GM12878 (cell line): ENCODE measurements at regions of chr10 and their contacts with region 1.

Region 1: DNA sequence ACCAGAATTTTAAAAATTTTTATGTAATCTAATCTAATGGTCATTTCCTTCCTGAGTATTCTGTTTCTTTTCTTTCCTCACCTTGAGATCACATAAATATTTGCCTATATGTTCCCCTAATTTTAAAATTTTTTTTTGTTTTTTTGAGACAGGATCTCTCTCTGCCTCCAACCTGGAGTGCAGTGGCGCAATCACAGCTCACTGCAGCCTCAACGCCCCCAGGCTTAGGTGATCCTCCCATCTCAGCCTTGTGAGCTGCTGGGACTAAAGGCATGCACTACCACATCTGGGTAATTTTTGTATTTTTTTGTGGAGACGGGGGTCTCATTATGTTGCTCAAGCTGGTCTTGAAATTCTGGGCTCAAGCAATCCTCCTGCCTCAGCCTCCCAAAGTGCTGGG is 4.1 kb upstream of the PROSER2 start:
- DNase-seq: no peak
- ATAC-seq: no peak
- H3K4me3 ChIP-seq: no peak overlapping the region
- H3K27ac ChIP-seq: no peak overlapping the region
- H3K4me1 ChIP-seq: no peaks in the 10 kb centered on the region
- H3K27me3 ChIP-seq: peaks cover 0 to 4% of the 10 kb centered on the region in 2 experiments; a peak in 2 of 4 replicates
- CTCF ChIP-seq: no peak
- EP300 ChIP-seq: no peak
- POLR2A ChIP-seq: no peak
- RAD21 ChIP-seq: no peak

Region 2: DNA sequence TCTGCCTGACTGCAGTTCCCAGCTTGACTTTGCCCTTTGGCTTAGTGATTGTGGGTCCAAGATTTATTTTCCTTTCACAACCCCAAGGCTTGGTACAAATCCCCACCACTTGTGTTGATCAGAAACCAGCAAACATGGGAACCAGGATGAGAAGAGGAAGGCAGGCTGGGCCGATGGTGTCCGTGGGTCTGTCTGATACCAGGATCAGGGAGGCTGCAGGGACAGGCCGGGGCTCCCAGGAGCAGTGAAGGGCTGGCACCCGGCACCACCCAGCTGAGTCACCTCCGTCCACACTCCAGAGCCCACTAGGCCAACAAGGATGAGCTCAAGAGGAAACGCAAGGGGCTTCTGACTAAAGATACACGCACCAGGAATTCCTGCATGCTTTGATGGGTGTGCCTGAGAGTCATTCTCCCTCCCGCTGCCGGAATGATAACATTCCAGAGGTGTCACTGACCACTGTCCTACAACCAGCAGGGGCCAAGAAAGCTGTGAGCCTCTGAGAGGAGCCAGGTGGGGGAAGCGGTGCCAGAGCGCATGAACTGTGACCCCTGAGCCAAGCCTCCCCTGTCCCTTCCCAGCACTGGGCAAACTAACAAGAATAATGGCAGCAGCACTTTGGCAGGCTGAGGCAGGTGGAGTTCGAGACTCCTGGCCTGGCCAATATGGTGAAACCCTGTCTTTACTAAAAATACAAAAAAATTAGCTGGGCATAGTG is 25.1 kb before region 1 on chr10:
- CTCF ChIA-PET with region 1: interaction called, 15 read pairs
- POLR2A ChIA-PET with region 1: no interaction called
- RAD21 ChIA-PET with region 1: interaction called, 3 read pairs
- SMC1A ChIA-PET with region 1: interaction called, 3 read pairs
- in situ Hi-C with region 1: no loop called
- intact Hi-C with region 1: no loop called
- DNase-seq: no peak
- ATAC-seq: no peak
- H3K4me3 ChIP-seq: no peak overlapping the region
- H3K27ac ChIP-seq: no peak overlapping the region
- H3K4me1 ChIP-seq: no peaks in the 10 kb centered on the region
- H3K27me3 ChIP-seq: no peaks in the 10 kb centered on the region; a peak in 1 of 4 replicates
- CTCF ChIP-seq: no peak
- EP300 ChIP-seq: no peak
- POLR2A ChIP-seq: no peak
- RAD21 ChIP-seq: no peak

Region 3: DNA sequence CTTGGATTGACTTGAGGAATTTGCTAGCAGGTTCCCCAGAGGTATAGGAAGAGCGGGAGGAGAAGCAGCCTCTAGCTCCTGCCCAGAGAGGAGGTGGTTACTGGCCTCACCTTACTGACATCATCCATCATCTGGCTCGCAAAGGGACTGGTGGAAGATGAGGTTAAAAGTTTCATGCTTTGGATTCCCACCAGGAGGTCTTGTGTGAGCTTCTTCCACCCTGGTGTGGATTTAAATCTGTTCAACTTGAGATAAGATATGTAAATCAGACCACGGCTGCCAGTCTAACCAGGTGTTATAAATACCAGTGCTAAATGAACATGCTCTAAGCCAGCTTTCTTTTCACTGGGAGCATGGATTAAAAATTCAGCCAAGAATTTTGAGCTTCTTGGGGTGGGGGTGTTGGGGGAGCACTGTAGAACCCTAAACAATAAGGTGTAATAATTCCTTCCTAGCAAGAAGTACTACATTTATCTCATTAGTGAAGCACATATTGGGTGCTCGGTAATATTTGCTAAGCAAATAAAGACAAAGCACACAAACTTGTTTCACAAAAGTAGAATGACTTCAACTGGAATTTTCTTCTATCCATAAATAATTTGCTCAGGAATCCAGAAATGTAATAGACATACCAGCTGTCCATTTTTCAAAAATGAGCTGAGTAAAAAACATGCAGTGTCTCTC is 11.9 kb after region 1 on chr10:
- CTCF ChIA-PET with region 1: interaction called, 13 read pairs
- POLR2A ChIA-PET with region 1: interaction called, 5 read pairs
- RAD21 ChIA-PET with region 1: no interaction called
- SMC1A ChIA-PET with region 1: no interaction called
- in situ Hi-C with region 1: no loop called
- intact Hi-C with region 1: no loop called
- DNase-seq: no peak
- ATAC-seq: no peak
- H3K4me3 ChIP-seq: no peak overlapping the region
- H3K27ac ChIP-seq: no peak overlapping the region
- H3K4me1 ChIP-seq: no peaks in the 10 kb centered on the region
- H3K27me3 ChIP-seq: no peaks in the 10 kb centered on the region; a peak in 1 of 4 replicates
- CTCF ChIP-seq: no peak
- EP300 ChIP-seq: no peak
- POLR2A ChIP-seq: no peak
- RAD21 ChIP-seq: no peak

Region 4: DNA sequence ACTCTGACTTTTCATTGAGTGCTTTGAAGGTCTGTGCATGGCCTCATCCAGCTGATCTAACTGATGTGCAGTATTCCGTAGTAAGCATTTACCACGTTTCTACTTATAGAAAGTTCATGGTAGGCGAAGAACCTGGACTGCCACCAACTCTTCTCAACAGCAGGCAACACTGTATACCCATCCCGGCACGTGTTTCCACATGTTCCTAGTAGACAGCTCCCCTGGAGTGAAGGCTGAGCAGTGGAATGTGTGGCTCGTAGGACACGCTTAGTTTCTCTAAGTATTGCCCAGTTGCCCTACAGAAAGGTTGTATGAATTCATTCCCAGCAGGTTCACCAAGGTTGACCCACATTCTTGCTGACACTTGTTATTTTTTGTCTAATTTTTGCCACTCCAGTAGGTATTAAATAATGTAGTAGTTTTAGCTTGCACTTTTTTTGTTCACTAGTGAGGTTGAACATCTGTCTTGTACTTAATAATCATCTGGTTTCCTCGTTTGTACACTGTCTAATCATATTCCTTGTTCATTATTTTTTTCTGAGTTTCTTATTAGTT is 19.3 kb after region 1 on chr10:
- CTCF ChIA-PET with region 1: interaction called, 13 read pairs
- POLR2A ChIA-PET with region 1: interaction called, 5 read pairs
- RAD21 ChIA-PET with region 1: no interaction called
- SMC1A ChIA-PET with region 1: no interaction called
- in situ Hi-C with region 1: no loop called
- intact Hi-C with region 1: no loop called
- DNase-seq: no peak
- ATAC-seq: no peak
- H3K4me3 ChIP-seq: no peak overlapping the region
- H3K27ac ChIP-seq: no peak overlapping the region
- H3K4me1 ChIP-seq: no peaks in the 10 kb centered on the region
- H3K27me3 ChIP-seq: no peaks in the 10 kb centered on the region; a peak in 1 of 4 replicates
- CTCF ChIP-seq: no peak
- EP300 ChIP-seq: no peak
- POLR2A ChIP-seq: no peak
- RAD21 ChIP-seq: no peak

Region 5: GRCh38 chr10:11846542-11846941 is 27.5 kb after region 1 on chr10:
- CTCF ChIA-PET with region 1: interaction called, 12 read pairs
- POLR2A ChIA-PET with region 1: no interaction called
- RAD21 ChIA-PET with region 1: no interaction called
- SMC1A ChIA-PET with region 1: no interaction called
- in situ Hi-C with region 1: no loop called
- intact Hi-C with region 1: no loop called
- DNase-seq: no peak
- ATAC-seq: no peak
- H3K4me3 ChIP-seq: no peak overlapping the region
- H3K27ac ChIP-seq: no peak overlapping the region
- H3K4me1 ChIP-seq: no peaks in the 10 kb centered on the region
- H3K27me3 ChIP-seq: no peaks in the 10 kb centered on the region
- CTCF ChIP-seq: no peak
- EP300 ChIP-seq: no peak
- POLR2A ChIP-seq: no peak
- RAD21 ChIP-seq: no peak